ENCODE measurements at regions of chr1 and their contacts with region 1.

Region 1: DNA sequence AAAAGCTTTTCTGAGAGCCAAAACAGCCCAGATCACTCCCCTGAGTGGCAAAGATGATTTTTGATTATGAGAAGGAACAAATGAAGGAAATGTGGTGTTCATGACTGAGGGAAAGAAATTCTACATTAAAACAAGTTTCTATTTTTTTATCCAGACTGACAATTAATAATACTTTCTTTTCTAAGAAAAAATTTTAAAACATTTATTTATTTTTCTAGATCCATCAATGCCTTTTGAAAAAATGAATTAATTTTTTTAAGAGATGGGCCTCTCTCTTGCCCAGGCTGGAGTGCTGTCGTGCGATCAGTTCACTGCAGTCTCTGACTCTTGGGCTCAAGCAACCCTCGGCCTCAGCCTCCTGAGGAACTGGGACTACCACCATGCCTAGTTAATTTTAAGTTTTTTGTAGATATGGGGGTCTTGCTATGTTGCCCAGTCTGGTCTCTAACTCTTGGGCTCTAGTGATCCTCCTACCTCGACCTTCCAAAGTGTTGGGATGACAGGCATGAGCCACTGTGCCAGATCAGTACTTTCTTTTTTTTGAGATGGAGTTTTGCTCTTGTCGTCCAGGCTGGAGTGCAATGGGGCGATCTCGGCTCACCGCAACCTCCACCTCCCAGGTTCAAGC is 11.2 kb upstream of the TXNIP start:
- DNase-seq: no peak
- H3K27ac ChIP-seq: peak overlapping the region; percentile 36; the same call in 1 of the 2 replicates
- CTCF ChIP-seq: peak; percentile 40

Region 2: GRCh38 chr1:145845514-145846161 is 162.0 kb before region 1 on chr1 and contains the start of gene NUDT17:
- CTCF ChIA-PET with region 1: interaction called, 19 read pairs
- POLR2A ChIA-PET with region 1: no interaction called
- DNase-seq: peak; percentile 77
- H3K27ac ChIP-seq: peak within 1 kb of the TSS; percentile 66
- CTCF ChIP-seq: peak; percentile 89

Region 3: DNA sequence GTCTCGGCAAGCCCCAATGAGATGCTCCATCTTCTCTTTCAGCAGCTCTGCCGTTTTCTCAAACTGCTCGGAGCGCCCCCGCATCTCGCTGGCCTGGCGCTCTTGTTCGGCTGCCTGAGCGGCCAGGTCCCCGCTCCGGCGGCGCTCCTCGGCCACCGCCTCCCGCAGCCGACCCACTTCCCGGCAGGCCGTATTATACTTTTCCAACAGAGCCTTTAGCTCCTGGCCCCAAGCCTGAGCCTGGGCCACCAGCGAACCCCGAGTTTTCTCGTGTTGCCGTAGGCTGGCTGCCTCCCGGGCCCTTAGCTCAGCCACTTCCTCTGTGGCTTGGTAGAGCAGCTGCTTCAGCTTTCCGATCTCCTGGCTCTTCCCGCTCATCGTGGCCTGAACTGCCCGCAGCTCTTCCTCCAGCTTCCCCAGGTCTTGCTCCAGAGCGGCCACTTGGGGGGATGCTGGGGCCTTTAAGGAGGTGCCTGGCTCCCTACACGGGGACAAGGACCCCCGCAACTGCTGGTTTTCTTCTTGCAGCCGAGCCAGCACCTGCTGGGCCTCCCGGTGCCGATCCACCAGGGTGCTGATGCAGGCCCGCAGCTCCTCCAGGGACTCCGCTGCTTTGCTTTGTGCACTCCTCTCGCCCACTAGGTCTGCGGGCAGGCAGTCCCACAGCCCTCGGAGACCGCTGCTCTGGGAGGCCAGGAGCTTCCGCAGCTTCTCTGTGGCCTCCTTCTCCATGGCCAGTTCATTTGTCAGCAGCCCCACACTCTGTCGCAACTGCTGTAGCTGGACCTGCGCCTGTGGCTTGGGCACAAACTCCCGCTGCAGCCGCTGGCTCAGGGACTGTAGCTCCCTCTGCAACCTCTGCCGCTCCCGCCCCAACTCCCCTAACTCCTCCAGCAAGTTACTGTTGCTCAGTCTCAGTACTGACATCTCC is 135.4 kb before region 1 on chr1:
- CTCF ChIA-PET with region 1: no interaction called
- POLR2A ChIA-PET with region 1: no interaction called
- DNase-seq: no peak
- H3K27ac ChIP-seq: no peak overlapping the region
- CTCF ChIP-seq: no peak

Region 4: DNA sequence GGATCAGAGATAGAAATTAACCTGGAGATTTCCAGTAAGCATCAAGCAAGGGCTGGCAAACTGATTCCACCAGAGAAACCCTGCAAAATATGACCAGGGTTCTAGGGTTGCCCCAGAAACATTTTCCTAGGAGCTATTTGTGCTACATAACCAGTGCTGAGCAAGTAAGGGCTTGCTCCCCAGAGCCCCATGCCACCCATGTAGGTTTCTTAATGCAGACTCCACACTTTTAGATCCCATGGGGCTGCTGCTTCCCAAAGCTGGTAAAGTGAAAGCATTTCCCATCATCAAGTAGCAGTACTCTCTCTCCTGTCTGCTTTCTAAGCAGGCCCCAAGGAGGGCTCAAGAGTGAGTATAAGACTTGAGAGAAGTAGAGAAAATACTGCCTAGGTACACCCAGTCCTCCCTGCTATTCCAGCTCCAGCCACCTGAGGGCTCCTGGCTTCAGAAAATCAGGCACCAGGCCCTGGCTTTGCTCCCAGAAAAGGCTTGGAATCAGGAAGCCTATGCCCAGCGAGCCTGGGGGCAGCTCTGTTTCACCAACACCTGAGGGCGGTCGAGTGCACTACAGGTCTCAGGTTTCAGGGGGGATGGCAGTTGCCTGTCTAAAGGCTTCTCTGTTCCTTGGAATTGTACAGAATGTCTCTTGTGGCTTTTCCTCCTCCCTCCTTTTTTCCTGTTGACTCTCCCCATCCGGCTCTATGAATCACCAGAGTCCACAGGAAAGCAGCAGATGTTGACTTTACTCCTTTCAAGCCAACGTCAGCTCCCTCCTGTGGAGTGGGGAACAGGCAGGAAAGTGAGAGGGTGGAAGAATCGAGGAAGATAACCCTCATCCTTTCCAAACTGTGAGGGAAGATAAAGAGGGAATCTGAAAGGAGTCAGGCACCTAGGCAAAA is 115.8 kb before region 1 on chr1:
- CTCF ChIA-PET with region 1: interaction called, 11 read pairs
- POLR2A ChIA-PET with region 1: no interaction called
- DNase-seq: peak; percentile 98
- H3K27ac ChIP-seq: peak overlapping the region; percentile 99
- CTCF ChIP-seq: peak; percentile 99

Region 5: GRCh38 chr1:145963995-145964901 is 43.4 kb before region 1 on chr1 and contains the starts of genes ANKRD34A and POLR3GL:
- CTCF ChIA-PET with region 1: interaction called, 10 read pairs
- POLR2A ChIA-PET with region 1: no interaction called
- DNase-seq: peak; percentile 92
- H3K27ac ChIP-seq: peak within 1 kb of the TSS; percentile 84
- CTCF ChIP-seq: no peak

Region 6: GRCh38 chr1:145978854-145979759 is 28.5 kb before region 1 on chr1:
- CTCF ChIA-PET with region 1: interaction called, 54 read pairs
- POLR2A ChIA-PET with region 1: no interaction called
- DNase-seq: peak; percentile 96
- H3K27ac ChIP-seq: peak overlapping the region; percentile 91
- CTCF ChIP-seq: no peak

Region 7: GRCh38 chr1:145990249-145991097 is 17.1 kb before region 1 on chr1:
- CTCF ChIA-PET with region 1: interaction called, 11 read pairs
- POLR2A ChIA-PET with region 1: no interaction called
- DNase-seq: no peak
- H3K27ac ChIP-seq: peak overlapping the region; percentile 69
- CTCF ChIP-seq: no peak

Measured in RWPE1 (cell line).